ENCODE measurements at regions of chr1 and their contacts with region 1.

Region 1: GRCh38 chr1:154558575-154559465 is at the start of gene UBE2Q1:
- DNase-seq: peak; percentile 98 to 100 (median 99)

Region 2: GRCh38 chr1:154220071-154220969 is 338.5 kb before region 1 on chr1 and contains the start of gene UBAP2L:
- intact Hi-C with region 1: loop called (anchors 5 kb)
- DNase-seq: peak; percentile 96 to 99 (median 98)

Region 3: GRCh38 chr1:154595621-154596020 is 36.8 kb after region 1 on chr1:
- intact Hi-C with region 1: no loop called
- DNase-seq: peak in 1 of 42 donors; percentile 12

Region 4: DNA sequence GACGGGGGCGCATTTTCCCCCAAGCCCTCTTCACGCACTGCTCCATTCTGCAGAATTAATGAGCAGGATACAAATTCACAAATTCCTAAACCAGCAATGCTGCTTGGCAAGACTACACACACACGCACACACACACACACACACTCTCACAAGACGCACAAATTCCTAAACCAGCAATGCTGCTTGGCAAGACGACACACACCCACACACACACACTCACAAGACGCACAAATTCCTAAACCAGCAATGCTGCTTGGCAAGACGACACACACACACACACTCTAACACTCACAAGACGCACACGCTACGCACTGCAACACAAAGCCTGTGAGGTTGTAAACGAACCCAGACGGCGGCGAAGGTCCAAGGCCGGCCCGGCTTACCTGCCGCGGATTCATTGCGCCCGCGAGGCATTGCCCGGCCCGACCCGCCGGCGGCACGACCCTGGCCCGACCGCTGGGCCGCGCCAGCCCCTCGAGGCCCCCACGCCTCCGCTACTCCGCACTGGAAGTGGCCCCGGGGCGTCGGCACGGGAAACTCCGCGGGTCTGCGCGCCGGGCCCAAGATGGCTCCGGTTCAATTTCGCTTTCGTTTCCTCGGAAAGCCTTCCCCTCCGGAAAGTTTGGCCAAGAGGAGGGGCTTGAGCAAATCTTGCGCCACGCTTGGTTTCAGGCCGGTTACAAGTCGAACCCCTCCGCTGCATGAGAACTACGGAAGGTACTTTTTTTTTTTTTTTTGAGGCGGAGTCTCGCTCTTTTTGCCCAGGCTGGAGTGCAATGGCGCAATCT is 49.0 kb after region 1 on chr1 and contains the start of gene ADAR:
- intact Hi-C with region 1: loop called (anchors 5 kb)
- DNase-seq: peak; percentile 59 to 92 (median 81)

Region 5: DNA sequence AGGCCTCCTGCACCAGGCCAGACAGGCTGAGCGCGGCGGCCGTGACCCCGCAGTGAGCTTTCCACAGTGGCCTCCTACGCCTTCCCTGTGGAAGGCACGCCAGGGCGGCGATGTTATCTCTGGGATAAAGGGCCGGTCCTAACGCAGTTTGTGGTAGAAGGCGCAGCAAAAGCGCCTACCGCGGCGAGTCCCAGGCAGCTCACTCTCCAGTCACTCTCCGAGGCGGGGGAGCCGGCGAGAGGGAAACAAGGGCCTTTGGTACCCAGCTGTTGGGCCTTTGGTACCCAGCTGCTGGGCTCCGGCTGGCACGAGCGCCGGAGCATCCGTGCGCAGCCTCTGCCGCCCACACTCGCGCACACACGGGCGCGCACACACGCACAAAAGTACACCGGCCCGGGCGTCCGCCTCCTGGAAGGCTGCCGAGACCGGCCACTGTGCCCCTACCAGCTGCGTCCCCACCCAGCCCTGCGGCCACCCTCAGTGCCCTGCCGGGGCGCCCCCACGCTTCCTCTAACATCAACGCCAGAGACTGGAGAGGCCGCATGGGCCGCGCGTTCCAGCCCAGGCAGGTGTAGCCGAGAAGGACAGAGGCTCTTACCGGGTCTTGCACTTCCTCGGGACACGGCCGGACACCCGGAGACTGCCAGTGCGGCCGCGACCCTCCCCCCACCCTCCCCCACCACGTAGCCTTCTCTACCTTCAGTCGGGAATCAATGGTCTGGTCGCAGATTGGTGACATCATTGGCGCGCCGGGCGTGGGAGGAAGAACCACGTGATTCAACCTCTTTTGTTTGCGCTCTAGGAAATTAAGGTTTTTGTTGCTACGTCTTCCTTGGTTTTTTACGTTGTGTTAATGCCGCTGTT is 68.7 kb after region 1 on chr1:
- intact Hi-C with region 1: loop called (anchors 5 kb)
- DNase-seq: peak; percentile 72 to 96 (median 88)

Region 6: DNA sequence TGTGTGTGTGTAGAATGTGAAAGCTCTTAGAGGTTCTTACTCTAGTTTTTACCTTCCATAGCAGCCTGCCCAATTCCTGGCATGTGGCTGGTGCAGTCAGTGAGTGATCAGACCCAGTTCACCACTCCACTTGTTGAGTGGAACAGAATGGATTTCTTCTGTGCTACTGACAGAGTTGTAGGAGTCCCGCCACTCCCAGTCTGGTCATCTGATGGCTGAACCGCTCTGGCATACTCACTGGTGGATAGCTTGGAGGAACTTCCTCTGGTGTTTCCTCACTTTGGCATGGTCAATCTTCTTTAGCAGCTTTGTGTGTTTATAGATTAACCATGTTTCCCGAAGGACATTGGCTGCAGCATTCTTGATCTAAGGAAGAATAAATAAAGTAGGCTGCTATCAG is 155.8 kb after region 1 on chr1:
- intact Hi-C with region 1: no loop called
- DNase-seq: no peak

Region 7: DNA sequence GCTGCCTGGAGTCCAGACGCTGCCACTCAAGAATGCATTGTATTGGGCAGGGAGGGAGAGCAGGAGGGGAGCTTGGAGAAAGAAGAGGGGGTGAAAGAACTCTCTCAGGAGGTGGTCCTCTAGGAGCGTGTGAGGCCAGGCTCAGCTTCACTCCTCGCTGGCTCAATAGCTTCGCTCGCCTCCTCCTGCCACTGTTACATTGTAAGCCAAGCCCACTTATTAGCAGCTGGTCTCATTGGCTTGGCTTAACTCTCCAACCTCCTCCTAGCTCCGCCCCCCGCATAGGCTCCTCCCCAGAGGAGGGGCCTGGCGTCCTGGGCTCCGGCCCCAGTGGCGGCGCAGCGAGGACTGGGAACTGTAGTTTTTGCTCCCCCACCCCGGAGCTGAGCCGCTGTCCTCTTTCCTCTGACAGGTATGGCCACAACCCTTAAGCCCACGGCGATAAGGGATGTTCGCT is 311.3 kb after region 1 on chr1 and contains the start of gene KCNN3:
- intact Hi-C with region 1: loop called (anchors 5 kb)
- DNase-seq: peak; percentile 88 to 99 (median 96)

Region 8: DNA sequence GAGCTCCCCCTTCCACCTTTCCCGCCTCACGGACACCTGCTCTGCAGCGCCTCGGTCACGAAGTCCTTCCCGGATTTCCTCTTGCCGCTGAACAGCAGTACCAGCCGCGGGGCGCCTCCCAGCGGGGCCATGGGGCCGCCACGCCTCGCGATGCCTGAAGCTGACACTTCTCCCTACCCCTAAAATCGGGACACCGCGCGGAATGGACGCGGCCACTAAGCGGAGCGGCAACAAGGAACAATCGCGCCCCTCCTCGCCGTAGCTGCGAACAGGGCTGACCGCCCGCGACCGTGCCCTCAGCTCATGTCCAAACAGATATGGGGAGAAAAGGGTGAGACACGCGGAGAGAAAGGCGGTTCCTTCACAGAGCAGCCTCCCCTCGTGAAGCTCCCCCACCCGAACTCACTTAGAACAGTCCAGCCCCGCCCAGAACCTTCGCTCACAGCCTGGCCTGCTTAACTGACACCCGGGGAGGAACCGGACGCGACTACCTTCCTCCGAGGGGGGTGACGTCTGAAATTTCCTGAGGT is 377.8 kb after region 1 on chr1 and contains the start of gene PMVK:
- intact Hi-C with region 1: loop called (anchors 5 kb)
- DNase-seq: peak; percentile 92 to 99 (median 97)

Measured in head of caudate nucleus (tissue), 42 donors.